ENCODE measurements at regions of chr3 and their contacts with region 1.

Region 1: GRCh38 chr3:153291056-153291685 is 129.1 kb downstream of the RAP2B start:
- DNase-seq: peak; percentile 47
- H3K4me3 Mint-ChIP-seq: no peak overlapping the region
- H3K27ac Mint-ChIP-seq: no peak overlapping the region
- H3K4me1 Mint-ChIP-seq: peaks cover 37% of the 10 kb centered on the region
- H3K27me3 Mint-ChIP-seq: no peaks in the 10 kb centered on the region
- CTCF ChIP-seq: peak; percentile 71

Region 2: DNA sequence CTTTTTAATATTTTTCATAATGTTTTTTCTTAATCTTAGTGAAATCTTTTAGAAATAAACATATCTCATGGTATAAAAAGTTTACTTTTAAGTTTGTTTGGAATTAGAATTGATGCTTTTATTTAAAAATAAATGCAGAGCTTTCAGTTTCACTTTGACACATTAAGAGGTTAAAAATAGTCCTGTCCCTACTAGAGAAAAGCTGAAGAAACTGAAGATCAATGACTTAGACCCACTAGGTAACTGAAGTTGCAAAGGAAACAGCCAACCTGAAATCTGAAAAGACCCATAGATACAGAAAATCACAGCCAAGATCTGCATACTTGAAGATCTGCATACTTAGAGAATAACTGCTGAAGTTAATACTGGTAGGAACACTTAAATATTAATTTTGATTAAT is 108.5 kb after region 1 on chr3:
- CTCF ChIA-PET with region 1: no interaction called
- intact Hi-C with region 1: no loop called
- DNase-seq: no peak
- H3K4me3 Mint-ChIP-seq: no peak overlapping the region
- H3K27ac Mint-ChIP-seq: no peak overlapping the region
- H3K4me1 Mint-ChIP-seq: peaks cover 9% of the 10 kb centered on the region
- H3K27me3 Mint-ChIP-seq: no peaks in the 10 kb centered on the region
- CTCF ChIP-seq: no peak

Region 3: GRCh38 chr3:153448151-153448829 is 157.1 kb after region 1 on chr3:
- CTCF ChIA-PET with region 1: no interaction called
- intact Hi-C with region 1: loop called (anchors 5 kb)
- DNase-seq: no peak
- H3K4me3 Mint-ChIP-seq: no peak overlapping the region
- H3K27ac Mint-ChIP-seq: no peak overlapping the region
- H3K4me1 Mint-ChIP-seq: no peaks in the 10 kb centered on the region
- H3K27me3 Mint-ChIP-seq: no peaks in the 10 kb centered on the region
- CTCF ChIP-seq: no peak

Region 4: GRCh38 chr3:153595186-153595815 is 304.1 kb after region 1 on chr3:
- CTCF ChIA-PET with region 1: no interaction called
- intact Hi-C with region 1: loop called (anchors 1 kb)
- DNase-seq: peak; percentile 32
- H3K4me3 Mint-ChIP-seq: no peak overlapping the region
- H3K27ac Mint-ChIP-seq: no peak overlapping the region
- H3K4me1 Mint-ChIP-seq: peaks cover 44% of the 10 kb centered on the region
- H3K27me3 Mint-ChIP-seq: no peaks in the 10 kb centered on the region
- CTCF ChIP-seq: peak; percentile 87

Region 5: GRCh38 chr3:154023148-154023547 is 732.0 kb after region 1 on chr3:
- CTCF ChIA-PET with region 1: no interaction called
- intact Hi-C with region 1: loop called (anchors 10 kb)
- DNase-seq: peak; percentile 57
- H3K4me3 Mint-ChIP-seq: no peak overlapping the region
- H3K27ac Mint-ChIP-seq: peak overlapping the region; percentile 25
- H3K4me1 Mint-ChIP-seq: peaks cover 14% of the 10 kb centered on the region
- H3K27me3 Mint-ChIP-seq: no peaks in the 10 kb centered on the region
- CTCF ChIP-seq: no peak

Measured in Calu3 (cell line).